MCF 10A (cell line): ENCODE measurements at regions of chr3 and their contacts with region 1.

Region 1: DNA sequence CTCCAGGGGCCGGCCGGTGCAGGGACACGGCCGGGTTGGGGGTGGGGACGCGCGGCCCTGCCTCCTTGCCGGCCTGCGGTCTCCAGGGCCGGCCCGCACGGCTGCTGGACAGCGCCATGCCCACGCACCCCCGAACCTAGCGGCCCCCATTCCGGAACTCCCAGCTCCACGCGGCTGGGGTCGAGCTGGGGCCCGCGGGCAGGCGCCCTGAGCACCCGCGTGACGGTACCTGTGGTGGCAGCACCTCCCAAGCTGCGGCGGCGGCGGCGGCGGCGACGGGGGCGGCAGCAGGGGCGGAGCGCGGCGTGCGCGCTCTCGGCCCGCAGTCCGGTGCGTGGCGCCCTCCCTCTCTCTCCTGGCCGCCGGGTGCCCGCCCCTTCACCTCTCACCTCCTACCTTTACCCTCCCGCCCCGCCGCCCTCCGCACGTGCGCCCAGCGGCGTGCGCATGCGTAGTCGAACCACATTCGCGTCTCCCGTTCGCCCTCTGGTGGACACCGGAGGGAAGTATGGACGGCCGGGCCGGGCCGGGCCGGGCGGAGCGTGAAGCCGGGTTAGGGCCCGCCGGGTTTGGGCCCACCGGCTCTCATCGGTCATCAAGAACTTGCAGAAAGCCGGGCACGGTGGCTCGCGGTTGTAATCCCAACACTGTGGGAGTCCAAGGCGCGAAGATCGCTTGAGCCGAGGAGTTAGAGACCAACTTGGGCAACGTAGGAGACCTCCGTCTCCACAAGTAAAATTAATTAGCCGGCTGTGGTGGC is at the start of gene SCAP:
- DNase-seq: peak; percentile 89
- H3K4me3 Mint-ChIP-seq: peak within 1 kb of the TSS; percentile 99
- H3K27ac Mint-ChIP-seq: peak within 1 kb of the TSS; percentile 86
- H3K4me1 Mint-ChIP-seq: peaks cover 23% of the 10 kb centered on the region
- H3K27me3 Mint-ChIP-seq: no peaks in the 10 kb centered on the region
- CTCF ChIP-seq: peak; percentile 87
- total RNA-seq, gene SCAP: 84.3 and 87.8 TPM in 2 replicates

Region 2: DNA sequence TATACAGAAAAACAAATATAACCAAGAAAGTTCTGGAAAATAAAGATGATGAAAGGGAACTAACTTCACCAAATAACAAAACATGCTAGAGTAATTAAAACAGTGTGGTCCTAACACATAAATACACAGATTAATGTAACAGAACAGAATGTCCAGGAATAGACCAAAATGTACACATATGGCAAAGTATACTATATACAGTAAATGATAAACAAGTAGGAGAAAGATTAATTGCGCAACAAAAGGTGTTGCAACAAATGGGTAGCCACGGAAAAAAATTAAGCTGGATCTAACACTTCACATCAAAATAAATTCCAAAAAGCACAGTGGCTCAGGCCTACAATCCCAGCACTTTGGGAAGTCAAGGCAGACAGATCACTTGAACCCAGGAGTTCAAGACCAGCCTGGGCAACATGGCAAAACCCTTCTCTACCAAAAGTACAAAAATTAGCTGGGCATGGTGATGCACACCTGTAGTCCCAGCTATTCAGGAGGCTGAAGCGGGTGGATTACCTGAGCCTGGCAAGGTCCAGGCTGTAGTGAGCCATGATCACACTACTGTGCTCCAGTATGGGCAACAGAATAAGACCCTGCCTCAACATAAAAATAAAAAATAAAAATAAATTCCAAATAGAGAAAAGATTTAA is 19.8 kb before region 1 on chr3:
- CTCF ChIA-PET with region 1: interaction called, 5 read pairs
- POLR2A ChIA-PET with region 1: interaction called, 16 read pairs
- intact Hi-C with region 1: no loop called
- DNase-seq: peak; percentile 72
- H3K4me3 Mint-ChIP-seq: no peak overlapping the region
- H3K27ac Mint-ChIP-seq: peak overlapping the region; percentile 90
- H3K4me1 Mint-ChIP-seq: peaks cover 14% of the 10 kb centered on the region
- H3K27me3 Mint-ChIP-seq: no peaks in the 10 kb centered on the region
- CTCF ChIP-seq: no peak

Region 3: DNA sequence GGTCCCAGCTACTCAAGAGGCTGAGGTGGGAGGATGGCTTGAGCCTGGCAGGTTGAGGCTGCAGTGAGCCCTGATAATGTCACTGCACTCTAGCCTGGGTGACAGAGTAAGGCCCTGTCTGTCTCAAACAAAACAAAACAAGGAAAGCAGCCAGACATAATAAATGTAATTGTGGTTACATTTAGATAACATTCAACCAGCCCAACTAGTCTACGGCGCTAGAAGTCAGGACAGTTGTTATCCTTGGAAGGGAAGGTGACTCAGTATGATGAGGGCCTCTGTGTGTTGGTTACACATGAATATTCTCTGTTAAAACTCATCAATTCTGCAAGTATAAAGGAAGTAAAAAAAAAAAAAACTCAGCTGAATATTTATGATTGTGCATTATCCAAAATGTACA is 129.9 kb after region 1 on chr3:
- CTCF ChIA-PET with region 1: no interaction called
- POLR2A ChIA-PET with region 1: no interaction called
- intact Hi-C with region 1: no loop called
- DNase-seq: no peak
- H3K4me3 Mint-ChIP-seq: no peak overlapping the region
- H3K27ac Mint-ChIP-seq: peak overlapping the region; percentile 13
- H3K4me1 Mint-ChIP-seq: no peaks in the 10 kb centered on the region
- H3K27me3 Mint-ChIP-seq: no peaks in the 10 kb centered on the region
- CTCF ChIP-seq: no peak